A673 (cell line): ENCODE measurements at regions of chr4 and their contacts with region 1.

Region 1: DNA sequence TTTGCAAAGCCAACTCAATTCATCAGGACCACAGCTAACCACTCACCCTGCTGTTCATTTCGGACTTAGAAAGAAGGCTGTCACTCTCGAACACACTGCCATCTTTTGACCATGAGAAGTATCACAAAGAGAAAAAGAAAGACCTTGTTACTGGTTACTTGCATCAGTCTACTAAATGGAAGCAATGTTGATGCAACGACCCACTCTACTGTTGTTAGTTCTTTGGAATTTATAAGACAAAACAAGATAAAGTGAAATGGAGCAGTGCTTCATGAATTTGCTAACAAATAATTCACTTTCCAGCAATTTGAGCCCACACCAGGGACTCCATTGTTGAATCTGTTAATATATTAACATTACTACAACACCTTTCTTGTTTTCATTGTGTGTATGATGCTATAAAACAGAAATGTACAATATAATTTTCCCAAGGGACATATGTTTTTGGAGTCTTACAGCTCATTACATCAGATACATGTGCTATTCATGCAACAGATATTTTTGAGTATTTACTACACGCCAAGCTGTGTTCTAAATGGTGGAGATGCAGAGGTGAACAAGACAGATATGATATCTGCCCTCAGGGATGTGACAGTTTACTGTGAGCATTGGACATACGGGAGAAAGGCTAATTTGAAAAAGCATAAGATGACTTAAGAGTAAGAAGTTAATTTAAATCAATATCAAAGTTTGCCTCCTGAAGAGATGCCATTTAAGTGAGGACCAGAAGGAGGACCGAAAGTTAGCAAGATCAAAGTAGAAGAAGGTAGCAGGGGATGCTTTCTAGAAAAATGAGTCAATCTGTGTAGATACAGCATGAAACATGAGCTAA is 87.2 kb downstream of the AREG start:
- DNase-seq: peak; percentile 64
- H3K4me3 ChIP-seq: no peak overlapping the region
- H3K27ac ChIP-seq: no peak overlapping the region
- H3K4me1 ChIP-seq: no peaks in the 10 kb centered on the region
- H3K27me3 ChIP-seq: no peaks in the 10 kb centered on the region
- CTCF ChIP-seq: peak; percentile 52

Region 2: DNA sequence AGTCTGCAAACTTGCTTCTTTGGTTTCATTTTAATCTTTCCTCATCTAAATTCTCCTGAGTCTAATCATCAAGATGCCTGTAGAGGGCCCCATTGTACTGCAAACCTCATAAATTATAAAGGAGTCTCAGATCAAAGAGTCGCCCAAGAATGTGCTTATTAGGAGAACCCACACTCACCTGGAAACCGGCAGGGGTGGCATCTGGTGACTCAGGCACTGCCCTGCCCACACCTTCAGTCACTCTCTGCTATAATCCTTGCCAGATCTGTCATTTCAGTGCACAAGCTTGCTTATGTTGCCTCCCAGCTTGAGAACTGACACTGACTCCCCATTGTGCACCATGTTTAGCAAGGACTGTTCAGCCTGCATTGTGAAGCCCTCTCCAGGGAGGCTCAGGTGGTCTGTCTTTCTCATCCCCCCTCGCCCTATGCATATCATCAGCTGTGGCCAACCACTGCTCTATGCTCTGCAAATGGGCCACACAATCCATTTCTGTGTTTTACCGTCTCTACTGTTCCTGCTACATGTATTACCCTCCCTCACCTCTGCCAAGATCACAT is 211.5 kb before region 1 on chr4:
- CTCF ChIA-PET with region 1: interaction called, 4 read pairs
- POLR2A ChIA-PET with region 1: no interaction called
- intact Hi-C with region 1: loop called (anchors 2 kb)
- DNase-seq: peak; percentile 63
- H3K4me3 ChIP-seq: no peak overlapping the region
- H3K27ac ChIP-seq: no peak overlapping the region
- H3K4me1 ChIP-seq: no peaks in the 10 kb centered on the region
- H3K27me3 ChIP-seq: no peaks in the 10 kb centered on the region
- CTCF ChIP-seq: peak; percentile 59

Region 3: GRCh38 chr4:74376888-74377483 is 155.2 kb before region 1 on chr4:
- CTCF ChIA-PET with region 1: no interaction called
- POLR2A ChIA-PET with region 1: no interaction called
- intact Hi-C with region 1: loop called (anchors 5 kb)
- DNase-seq: peak; percentile 40
- H3K4me3 ChIP-seq: no peak overlapping the region
- H3K27ac ChIP-seq: no peak overlapping the region
- H3K4me1 ChIP-seq: no peaks in the 10 kb centered on the region
- H3K27me3 ChIP-seq: no peaks in the 10 kb centered on the region
- CTCF ChIP-seq: peak; percentile 54; the same call in 1 of the 2 replicates